ENCODE measurements at regions of chr17 and their contacts with region 1.

Region 1: DNA sequence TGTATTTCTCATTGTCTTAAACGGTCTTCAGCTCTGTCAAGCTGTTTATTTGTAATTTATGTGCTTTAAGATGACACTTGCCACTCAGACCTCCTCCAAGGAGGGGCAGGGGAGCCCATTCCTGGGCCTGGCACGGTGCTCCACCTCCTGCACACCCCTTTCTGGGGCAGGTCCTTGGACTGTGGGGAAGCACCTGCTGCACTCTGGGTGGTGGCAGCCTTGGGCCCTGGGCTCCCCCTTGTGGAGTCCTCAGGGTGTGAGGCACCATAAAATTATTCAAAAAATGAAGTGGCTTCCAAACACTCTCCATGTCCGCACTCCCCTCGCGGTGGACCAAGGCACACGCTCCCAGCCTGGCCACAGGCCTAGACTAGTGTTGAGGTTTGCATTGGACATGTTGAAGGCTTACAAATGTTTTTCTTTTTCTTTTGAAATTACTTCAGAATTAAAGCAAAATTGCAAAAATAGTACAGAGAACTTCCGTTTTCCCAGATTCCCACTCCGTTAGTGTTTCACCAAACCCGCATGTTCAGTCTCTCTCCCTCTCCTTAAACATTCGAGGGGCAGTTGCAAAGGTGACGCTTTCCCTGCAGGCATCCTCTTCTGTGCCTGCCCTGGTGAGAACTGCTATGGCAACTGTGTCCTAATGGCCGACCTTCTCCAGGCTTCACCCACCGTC is 32.4 kb downstream of the FOXK2 start:
- DNase-seq: peak; percentile 87
- ATAC-seq: peak; percentile 82

Region 2: DNA sequence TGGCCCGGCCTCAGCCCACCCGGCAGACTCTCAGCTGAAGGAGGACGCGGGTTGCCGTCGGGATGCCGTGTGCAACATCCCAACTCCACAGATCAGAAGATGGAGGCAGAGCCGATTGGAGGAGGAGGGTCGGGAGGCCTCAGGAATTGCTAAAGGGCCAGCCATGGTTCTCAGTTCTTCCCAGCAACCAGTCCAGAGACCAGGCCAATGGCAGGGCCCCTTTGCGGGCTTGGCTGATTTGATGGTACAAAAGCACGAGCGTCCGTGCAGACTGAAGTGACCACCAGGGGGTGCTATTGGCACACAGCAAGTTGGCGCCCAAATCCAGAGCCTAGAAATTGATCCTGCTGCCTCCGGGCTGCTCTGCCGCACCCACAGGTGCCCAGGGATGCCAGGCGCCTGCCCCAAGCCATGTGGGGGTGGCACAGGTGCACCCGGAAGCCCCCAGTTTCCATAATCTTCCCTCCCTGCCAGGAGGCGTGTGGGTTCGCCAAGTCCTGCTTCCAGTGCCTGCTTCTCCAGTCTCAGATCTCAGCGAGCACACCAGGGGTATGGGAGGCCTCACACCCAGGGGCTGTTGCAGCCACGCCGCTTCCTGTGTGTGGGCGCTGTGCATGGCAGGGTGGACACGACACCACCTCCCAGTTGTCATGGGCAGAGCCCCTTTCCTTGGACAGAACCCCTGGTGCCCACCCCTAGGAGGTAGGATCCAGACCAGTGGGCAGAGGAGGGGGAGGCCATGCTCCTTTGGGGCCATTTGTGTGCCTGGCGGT is 200.0 kb before region 1 on chr17:
- intact Hi-C with region 1: loop called (anchors 5 kb)
- DNase-seq: peak; percentile 89
- ATAC-seq: peak; percentile 74

Region 3: GRCh38 chr17:82494236-82495055 is 57.5 kb before region 1 on chr17:
- intact Hi-C with region 1: loop called (anchors 5 kb)
- DNase-seq: peak; percentile 89
- ATAC-seq: peak; percentile 81

Region 4: DNA sequence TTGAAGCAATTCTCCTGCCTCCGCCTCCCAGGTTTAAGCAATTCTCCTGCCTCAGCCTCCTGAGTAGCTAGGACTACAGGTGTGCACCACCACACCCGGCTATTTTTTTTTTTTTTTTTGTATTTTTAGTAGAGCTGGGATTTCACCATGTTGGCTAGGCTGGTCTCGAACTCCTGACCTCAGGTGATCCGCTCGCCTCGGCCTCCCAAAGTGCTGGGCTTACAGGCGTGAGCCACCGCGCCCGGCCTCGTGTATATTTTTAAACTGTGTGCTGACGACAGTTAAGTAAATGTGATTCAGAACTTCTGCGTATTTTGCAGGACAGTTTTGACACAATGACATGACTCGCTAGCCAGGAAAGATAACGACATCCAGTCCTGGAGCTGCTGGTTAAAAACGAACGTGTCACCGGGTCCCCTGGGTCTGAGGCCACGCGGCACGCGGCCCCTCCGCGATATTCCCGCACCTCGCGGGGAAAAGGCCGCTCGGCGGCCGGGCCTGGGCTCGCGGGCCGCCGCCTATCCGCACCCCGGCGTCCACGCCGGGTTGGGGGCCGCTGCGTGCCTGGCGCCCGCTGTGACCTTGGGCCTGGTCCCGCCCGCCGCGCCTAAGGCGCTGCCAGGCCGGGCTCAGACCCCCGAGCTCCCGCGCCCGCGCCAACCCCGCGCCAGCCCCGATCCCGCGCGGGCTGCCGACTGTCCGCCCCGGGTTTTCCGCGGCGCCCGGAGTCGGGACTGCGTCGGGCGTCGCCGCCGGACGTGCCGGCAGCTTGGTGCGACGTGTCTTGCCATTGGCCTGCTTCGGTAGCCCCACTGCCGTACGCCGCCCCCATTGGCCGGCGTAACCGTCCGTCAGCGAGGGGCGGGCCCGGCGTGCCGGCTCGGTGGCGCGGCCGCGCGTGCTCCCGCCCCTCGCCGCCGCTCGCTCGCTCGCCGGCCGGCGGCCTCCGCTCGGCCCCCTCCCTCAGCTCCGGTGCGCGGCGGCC is 32.8 kb before region 1 on chr17 and contains the start of gene FOXK2:
- intact Hi-C with region 1: loop called (anchors 5 kb)
- DNase-seq: peak; percentile 95
- ATAC-seq: peak; percentile 99
- total RNA-seq, gene FOXK2: 39.4 TPM

Measured in Right ventricle myocardium inferior (tissue), 1 donor.